B cell (primary cell): ENCODE measurements at regions of chr9 and their contacts with region 1.

Region 1: GRCh38 chr9:98034593-98035546 is 21.7 kb upstream of the NANS start:
- DNase-seq: peak; percentile 91
- ATAC-seq: peak; percentile 87
- H3K4me3 ChIP-seq: peak overlapping the region in 1 of 5 experiments; percentile 38
- H3K4me3 Mint-ChIP-seq: peak overlapping the region; percentile 53
- H3K27ac ChIP-seq: peak overlapping the region; percentile 1 to 34
- H3K27ac Mint-ChIP-seq: peak overlapping the region; percentile 57
- H3K4me1 ChIP-seq: peaks cover 10 to 25% of the 10 kb centered on the region in 2 donors
- H3K4me1 Mint-ChIP-seq: peaks cover 37% of the 10 kb centered on the region
- H3K27me3 ChIP-seq: no peaks in the 10 kb centered on the region
- H3K27me3 Mint-ChIP-seq: no peaks in the 10 kb centered on the region
- CTCF ChIP-seq: peak; percentile 78

Region 2: GRCh38 chr9:97990266-97990665 is 44.6 kb before region 1 on chr9:
- CTCF ChIA-PET with region 1: interaction called, 27 read pairs
- POLR2A ChIA-PET with region 1: no interaction called
- intact Hi-C with region 1: loop called (anchors 2 kb)
- DNase-seq: no peak
- ATAC-seq: no peak
- H3K4me3 ChIP-seq: no peak overlapping the region
- H3K4me3 Mint-ChIP-seq: peak overlapping the region; percentile 18
- H3K27ac ChIP-seq: peak overlapping the region in 1 of 2 donors; percentile 39
- H3K27ac Mint-ChIP-seq: peak overlapping the region; percentile 51
- H3K4me1 ChIP-seq: peaks cover 58% of the 10 kb centered on the region in 2 donors
- H3K4me1 Mint-ChIP-seq: peaks cover 89% of the 10 kb centered on the region
- H3K27me3 ChIP-seq: no peaks in the 10 kb centered on the region
- H3K27me3 Mint-ChIP-seq: no peaks in the 10 kb centered on the region
- CTCF ChIP-seq: no peak

Region 3: DNA sequence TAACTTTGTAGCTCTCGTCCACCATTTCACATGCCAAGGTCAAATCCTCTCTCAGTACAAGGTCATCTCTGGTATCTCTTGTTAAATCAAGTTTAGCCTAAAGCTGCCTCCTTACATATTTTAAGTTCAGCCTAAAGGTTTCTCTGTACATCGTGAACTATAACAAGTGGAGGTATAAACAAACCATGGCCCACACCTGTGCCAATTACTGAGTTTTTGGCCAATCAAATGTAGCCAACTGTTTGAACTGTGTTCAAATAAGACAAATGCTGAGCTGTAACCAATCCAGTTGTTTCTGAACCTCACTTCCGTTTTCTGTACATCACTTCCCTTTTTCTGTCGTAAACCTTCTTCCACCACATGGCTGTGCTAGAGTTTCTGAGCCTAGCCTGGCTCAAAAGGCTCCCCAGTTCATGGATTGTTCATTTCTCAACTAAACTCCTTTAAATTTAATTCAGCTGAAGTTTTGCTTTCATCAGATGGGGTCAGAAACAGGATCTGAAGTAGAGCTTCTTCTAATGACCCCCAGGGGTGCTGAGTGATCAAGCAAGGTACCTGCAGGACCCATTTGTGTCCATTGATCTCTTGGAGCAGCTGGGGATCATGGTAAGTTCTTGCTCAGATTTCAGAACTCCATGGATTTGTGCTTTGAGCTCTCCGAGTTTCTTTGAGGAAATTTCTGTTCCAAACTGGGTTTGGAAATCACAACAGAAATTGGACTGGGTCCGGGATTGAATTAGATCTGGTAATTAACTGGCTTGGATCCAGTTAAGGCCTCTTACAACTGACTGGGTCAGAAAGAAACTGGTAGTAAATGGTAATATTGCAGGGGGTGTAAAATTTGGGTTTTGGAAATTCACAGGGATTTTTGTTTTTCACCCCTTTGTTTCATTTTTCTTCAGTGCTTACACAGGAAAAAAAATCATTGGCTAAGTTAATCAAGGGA is 10.6 kb after region 1 on chr9:
- CTCF ChIA-PET with region 1: interaction called, 34 read pairs
- POLR2A ChIA-PET with region 1: interaction called, 10 read pairs
- intact Hi-C with region 1: no loop called
- DNase-seq: peak; percentile 83
- ATAC-seq: peak; percentile 77
- H3K4me3 ChIP-seq: peak overlapping the region; percentile 15 to 74 (median 48)
- H3K4me3 Mint-ChIP-seq: peak overlapping the region; percentile 63
- H3K27ac ChIP-seq: peak overlapping the region; percentile 56 to 80
- H3K27ac Mint-ChIP-seq: peak overlapping the region; percentile 84
- H3K4me1 ChIP-seq: peaks cover 33 to 35% of the 10 kb centered on the region in 2 donors
- H3K4me1 Mint-ChIP-seq: peaks cover 39% of the 10 kb centered on the region
- H3K27me3 ChIP-seq: no peaks in the 10 kb centered on the region
- H3K27me3 Mint-ChIP-seq: no peaks in the 10 kb centered on the region
- CTCF ChIP-seq: peak; percentile 13

Region 4: GRCh38 chr9:98085949-98086348 is 51.1 kb after region 1 on chr9:
- CTCF ChIA-PET with region 1: no interaction called
- POLR2A ChIA-PET with region 1: no interaction called
- intact Hi-C with region 1: no loop called
- DNase-seq: no peak
- ATAC-seq: no peak
- H3K4me3 ChIP-seq: no peak overlapping the region
- H3K4me3 Mint-ChIP-seq: no peak overlapping the region
- H3K27ac ChIP-seq: peak overlapping the region in 1 of 2 donors; percentile 29
- H3K27ac Mint-ChIP-seq: peak overlapping the region; percentile 79
- H3K4me1 ChIP-seq: peaks cover 0 to 8% of the 10 kb centered on the region in 2 donors
- H3K4me1 Mint-ChIP-seq: peaks cover 20% of the 10 kb centered on the region
- H3K27me3 ChIP-seq: no peaks in the 10 kb centered on the region
- H3K27me3 Mint-ChIP-seq: no peaks in the 10 kb centered on the region
- CTCF ChIP-seq: no peak

Region 5: GRCh38 chr9:98150721-98151120 is 115.9 kb after region 1 on chr9:
- CTCF ChIA-PET with region 1: no interaction called
- POLR2A ChIA-PET with region 1: no interaction called
- intact Hi-C with region 1: no loop called
- DNase-seq: no peak
- ATAC-seq: no peak
- H3K4me3 ChIP-seq: no peak overlapping the region
- H3K4me3 Mint-ChIP-seq: no peak overlapping the region
- H3K27ac ChIP-seq: no peak overlapping the region
- H3K27ac Mint-ChIP-seq: no peak overlapping the region
- H3K4me1 ChIP-seq: peaks cover 9 to 11% of the 10 kb centered on the region in 2 donors
- H3K4me1 Mint-ChIP-seq: peaks cover 8% of the 10 kb centered on the region
- H3K27me3 ChIP-seq: no peaks in the 10 kb centered on the region
- H3K27me3 Mint-ChIP-seq: no peaks in the 10 kb centered on the region
- CTCF ChIP-seq: no peak